Activated B cell treated with CpG ODN at 0.5 μM for 24 hours (primary cell): ENCODE measurements at regions of chr3 and their contacts with region 1.

Region 1: DNA sequence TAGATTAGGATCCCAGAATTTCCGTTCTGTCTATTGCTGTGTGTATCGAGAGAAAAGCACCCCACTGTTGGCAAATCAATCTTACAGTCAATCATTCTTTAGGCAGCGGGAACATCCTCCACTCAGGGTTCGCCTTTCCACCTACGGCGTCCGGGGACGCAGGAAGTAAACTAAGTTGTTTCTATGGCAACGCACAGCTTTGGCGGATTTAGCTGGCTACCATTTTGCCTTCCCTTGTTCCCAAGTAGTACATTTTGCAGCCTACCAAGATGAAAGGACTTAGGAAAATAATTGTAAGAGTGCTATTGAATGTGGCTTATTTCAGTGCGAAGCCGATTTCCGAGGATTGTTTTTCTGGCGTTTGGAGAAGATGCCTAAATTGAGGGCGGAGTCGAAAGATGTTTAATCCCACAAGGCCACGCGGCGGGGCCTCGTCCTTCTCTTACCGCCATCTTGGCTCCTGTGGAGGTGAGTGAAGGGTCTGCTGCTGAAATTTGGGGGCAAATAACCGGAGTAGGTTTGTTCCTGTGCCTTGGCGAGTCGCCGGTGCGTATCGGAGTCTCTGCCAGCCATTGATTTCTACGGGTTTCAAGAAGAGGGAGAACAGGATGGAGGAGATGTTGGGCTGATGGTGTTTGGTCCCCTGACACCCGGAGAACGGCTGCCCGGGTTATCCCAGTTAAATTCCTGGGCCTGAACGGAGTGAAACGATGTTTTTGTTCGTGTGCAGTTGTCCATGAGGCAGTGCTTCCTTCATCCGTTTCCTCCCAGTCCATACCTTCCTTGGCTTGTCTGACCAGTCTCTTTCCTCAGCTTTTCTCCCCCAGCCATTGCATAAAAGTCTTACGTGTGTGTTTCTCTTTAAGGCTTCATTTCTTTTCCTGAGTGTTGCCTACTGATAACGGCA is at the start of gene RPL35A:
- DNase-seq: peak; percentile 72
- ATAC-seq: peak; percentile 89
- H3K4me3 Mint-ChIP-seq: peak within 1 kb of the TSS; percentile 100
- H3K27ac Mint-ChIP-seq: peak within 1 kb of the TSS; percentile 99
- H3K4me1 Mint-ChIP-seq: peaks cover 43% of the 10 kb centered on the region
- H3K27me3 Mint-ChIP-seq: no peaks in the 10 kb centered on the region
- CTCF ChIP-seq: no peak
- total RNA-seq, gene RPL35A: 1,534 and 1,556 TPM in 2 replicates

Region 2: GRCh38 chr3:196774191-196774820 is 1175.7 kb before region 1 on chr3:
- CTCF ChIA-PET with region 1: no interaction called
- POLR2A ChIA-PET with region 1: no interaction called
- intact Hi-C with region 1: no loop called
- DNase-seq: no peak
- ATAC-seq: no peak
- H3K4me3 Mint-ChIP-seq: no peak overlapping the region
- H3K27ac Mint-ChIP-seq: no peak overlapping the region
- H3K4me1 Mint-ChIP-seq: peaks cover 71% of the 10 kb centered on the region
- H3K27me3 Mint-ChIP-seq: no peaks in the 10 kb centered on the region
- CTCF ChIP-seq: no peak

Region 3: GRCh38 chr3:197224034-197224444 is 726.0 kb before region 1 on chr3:
- CTCF ChIA-PET with region 1: no interaction called
- POLR2A ChIA-PET with region 1: no interaction called
- intact Hi-C with region 1: no loop called
- DNase-seq: no peak
- ATAC-seq: no peak
- H3K4me3 Mint-ChIP-seq: no peak overlapping the region
- H3K27ac Mint-ChIP-seq: no peak overlapping the region
- H3K4me1 Mint-ChIP-seq: peaks cover 19% of the 10 kb centered on the region
- H3K27me3 Mint-ChIP-seq: no peaks in the 10 kb centered on the region
- CTCF ChIP-seq: no peak

Region 4: DNA sequence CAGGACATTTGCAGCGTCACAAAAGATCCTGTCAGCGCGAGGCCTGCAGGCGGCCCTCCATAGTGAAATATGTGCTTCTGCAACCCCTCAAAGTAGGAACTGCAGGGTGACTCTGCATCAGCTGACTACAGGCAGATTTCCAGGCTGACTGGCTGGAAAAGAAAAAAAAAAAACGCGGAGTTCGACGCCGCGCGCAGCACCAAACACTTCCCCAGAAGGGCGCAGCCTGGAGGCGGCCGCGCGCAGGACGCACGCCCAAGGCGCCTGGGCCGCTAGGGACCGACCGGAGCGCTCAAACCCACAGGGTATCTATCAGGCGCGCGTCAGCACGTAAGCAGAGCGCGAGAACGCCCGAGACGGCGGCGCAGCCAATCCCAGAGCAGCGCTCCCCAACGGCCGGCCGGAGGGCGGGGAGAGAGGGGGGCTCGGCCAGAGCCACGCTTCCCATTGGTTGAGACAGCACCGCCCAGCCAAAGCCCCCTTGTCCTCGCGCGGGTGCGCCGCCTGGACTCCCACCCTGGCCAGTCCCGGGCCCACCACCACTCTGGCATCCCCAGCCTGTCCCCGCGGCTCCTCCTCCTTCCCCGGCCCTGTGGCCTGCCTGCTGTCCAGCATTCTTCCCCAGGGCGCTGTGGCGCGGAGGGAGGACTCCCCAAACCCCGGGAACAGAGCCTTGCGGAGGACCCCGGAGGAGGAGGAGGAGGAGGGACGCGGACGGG is 395.3 kb before region 1 on chr3:
- CTCF ChIA-PET with region 1: no interaction called
- POLR2A ChIA-PET with region 1: no interaction called
- intact Hi-C with region 1: loop called (anchors 1 kb)
- DNase-seq: peak; percentile 88
- ATAC-seq: peak; percentile 96
- H3K4me3 Mint-ChIP-seq: peak overlapping the region; percentile 90
- H3K27ac Mint-ChIP-seq: peak overlapping the region; percentile 86
- H3K4me1 Mint-ChIP-seq: peaks cover 8% of the 10 kb centered on the region
- H3K27me3 Mint-ChIP-seq: peaks cover 5% of the 10 kb centered on the region
- CTCF ChIP-seq: no peak

Region 5: GRCh38 chr3:197736491-197737318 is 213.3 kb before region 1 on chr3 and contains the start of gene RUBCN:
- CTCF ChIA-PET with region 1: no interaction called
- POLR2A ChIA-PET with region 1: no interaction called
- intact Hi-C with region 1: loop called (anchors 10 kb)
- DNase-seq: peak; percentile 88
- ATAC-seq: peak; percentile 87
- H3K4me3 Mint-ChIP-seq: peak within 1 kb of the TSS; percentile 94
- H3K27ac Mint-ChIP-seq: peak within 1 kb of the TSS; percentile 98
- H3K4me1 Mint-ChIP-seq: peaks cover 58% of the 10 kb centered on the region
- H3K27me3 Mint-ChIP-seq: no peaks in the 10 kb centered on the region
- CTCF ChIP-seq: no peak
- total RNA-seq, gene RUBCN: 196 and 217 TPM in 2 replicates

Region 6: DNA sequence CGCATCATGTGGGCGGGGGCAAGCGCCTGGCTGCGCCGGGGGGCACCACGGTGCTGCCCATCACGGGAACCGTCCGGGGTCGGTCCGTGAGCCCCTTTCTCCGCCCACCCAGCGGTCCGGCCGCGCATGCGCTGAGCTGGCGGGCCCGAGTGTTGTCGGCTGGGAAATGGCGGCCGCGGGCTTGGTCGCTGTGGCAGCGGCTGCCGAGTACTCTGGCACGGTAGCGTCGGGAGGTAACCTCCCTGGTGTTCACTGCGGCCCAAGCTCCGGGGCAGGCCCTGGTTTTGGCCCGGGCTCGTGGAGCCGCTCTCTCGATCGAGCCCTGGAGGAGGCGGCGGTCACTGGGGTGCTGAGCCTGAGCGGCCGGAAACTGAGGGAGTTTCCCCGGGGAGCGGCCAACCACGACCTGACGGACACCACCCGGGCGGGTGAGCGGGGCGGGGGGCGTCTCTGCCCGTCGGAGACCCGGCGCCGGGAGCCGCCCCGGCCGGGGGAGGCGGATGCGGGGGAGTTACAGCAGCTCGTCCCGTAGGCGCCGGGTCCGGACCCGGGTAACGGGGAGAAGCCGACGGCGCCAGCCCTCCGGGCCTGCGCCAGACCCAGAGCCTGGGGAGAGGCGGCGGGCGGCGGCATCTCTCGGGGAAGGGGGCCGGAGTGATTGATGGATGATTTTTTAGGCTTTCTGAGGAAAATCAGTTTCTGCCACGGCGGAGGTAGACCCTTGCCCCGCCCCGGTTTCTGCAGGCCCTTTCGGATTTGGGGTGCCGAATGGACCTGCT is 158.7 kb before region 1 on chr3 and contains the start of gene LRCH3:
- CTCF ChIA-PET with region 1: no interaction called
- POLR2A ChIA-PET with region 1: no interaction called
- intact Hi-C with region 1: loop called (anchors 5 kb)
- DNase-seq: peak; percentile 84
- ATAC-seq: peak; percentile 73
- H3K4me3 Mint-ChIP-seq: peak within 1 kb of the TSS; percentile 86
- H3K27ac Mint-ChIP-seq: peak within 1 kb of the TSS; percentile 97
- H3K4me1 Mint-ChIP-seq: peaks cover 63% of the 10 kb centered on the region
- H3K27me3 Mint-ChIP-seq: no peaks in the 10 kb centered on the region
- CTCF ChIP-seq: no peak
- total RNA-seq, gene LRCH3: 94.1 and 96.1 TPM in 2 replicates

Region 7: DNA sequence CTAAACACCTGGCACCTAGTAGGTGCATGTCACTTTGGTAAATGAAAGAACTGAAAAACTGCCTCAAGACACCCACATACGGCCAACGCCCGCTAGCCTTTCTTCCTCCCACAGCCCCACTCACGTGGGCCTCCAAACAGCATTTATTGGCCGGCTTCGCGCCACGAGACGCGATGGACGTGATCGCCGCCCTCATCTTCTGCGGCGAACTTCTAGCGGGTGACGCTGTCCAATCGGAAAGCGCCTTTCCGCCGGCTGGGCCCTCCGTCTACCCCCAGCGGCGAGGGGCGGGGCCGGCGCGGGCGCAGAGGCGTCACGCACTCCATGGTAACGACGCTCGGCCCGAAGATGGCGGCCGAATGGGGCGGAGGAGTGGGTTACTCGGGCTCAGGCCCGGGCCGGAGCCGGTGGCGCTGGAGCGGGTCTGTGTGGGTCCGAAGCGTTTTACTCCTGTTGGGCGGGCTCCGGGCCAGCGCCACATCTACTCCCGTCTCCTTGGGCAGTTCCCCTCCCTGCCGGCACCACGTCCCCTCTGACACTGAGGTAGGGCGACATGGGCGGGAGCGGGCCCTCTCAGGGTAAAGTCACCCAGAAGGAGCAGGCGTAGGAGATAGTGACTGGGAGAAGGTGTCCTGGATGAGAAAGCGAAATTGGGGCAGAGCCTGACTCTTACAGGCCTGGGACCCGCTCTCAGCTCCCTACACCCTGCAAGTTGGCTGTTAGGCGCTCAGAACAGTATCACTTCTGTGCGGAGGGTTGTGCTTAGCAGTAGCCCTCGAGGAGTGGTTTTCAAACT is 10.1 kb after region 1 on chr3 and contains the start of gene LMLN:
- CTCF ChIA-PET with region 1: no interaction called
- POLR2A ChIA-PET with region 1: interaction called, 13 read pairs
- intact Hi-C with region 1: loop called (anchors 1 kb)
- DNase-seq: peak; percentile 89
- ATAC-seq: peak; percentile 97
- H3K4me3 Mint-ChIP-seq: peak within 1 kb of the TSS; percentile 89
- H3K27ac Mint-ChIP-seq: peak within 1 kb of the TSS; percentile 89
- H3K4me1 Mint-ChIP-seq: peaks cover 30% of the 10 kb centered on the region
- H3K27me3 Mint-ChIP-seq: peaks cover 1% of the 10 kb centered on the region
- CTCF ChIP-seq: no peak
- total RNA-seq, gene LMLN: 2.9 and 4.1 TPM in 2 replicates

Region 8: DNA sequence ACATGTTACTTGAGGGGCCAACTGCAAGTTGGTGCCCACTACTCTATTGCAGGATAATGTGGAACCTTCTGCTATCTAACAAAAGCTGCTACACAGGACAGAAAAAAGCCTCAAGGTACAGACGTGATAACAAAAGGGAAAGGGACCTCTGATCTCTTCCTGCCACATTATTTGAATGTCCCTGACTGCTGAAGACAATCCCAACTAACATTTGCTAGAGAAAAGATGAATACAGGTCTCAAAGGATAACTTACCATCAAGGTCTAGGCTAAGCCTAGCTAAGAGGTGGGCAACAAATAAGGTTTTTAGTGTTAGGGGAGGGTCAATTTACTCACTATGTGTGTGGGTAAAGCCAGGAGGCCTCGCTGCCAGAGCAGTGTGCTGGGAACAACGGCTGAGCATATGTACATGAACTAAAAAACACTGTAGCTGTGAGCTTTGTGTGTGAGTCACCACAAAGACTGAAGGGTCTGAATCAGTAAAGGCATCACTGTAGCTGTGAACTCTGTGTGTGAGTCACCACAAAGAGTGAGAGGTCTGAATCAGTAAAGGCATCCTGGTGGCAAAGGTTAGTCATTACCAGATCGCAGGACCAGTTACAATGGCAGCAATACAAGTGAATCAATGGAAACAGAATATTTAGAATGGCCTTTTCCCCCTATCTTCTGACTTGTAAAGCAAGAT is 121.7 kb after region 1 on chr3:
- CTCF ChIA-PET with region 1: no interaction called
- POLR2A ChIA-PET with region 1: interaction called, 3 read pairs
- intact Hi-C with region 1: loop called (anchors 1 kb)
- DNase-seq: no peak
- ATAC-seq: peak; percentile 100
- H3K4me3 Mint-ChIP-seq: no peak overlapping the region
- H3K27ac Mint-ChIP-seq: peak overlapping the region; percentile 69
- H3K4me1 Mint-ChIP-seq: peaks cover 34% of the 10 kb centered on the region
- H3K27me3 Mint-ChIP-seq: no peaks in the 10 kb centered on the region
- CTCF ChIP-seq: no peak